ENCODE measurements at regions of chr5 and their contacts with region 1.

Region 1: DNA sequence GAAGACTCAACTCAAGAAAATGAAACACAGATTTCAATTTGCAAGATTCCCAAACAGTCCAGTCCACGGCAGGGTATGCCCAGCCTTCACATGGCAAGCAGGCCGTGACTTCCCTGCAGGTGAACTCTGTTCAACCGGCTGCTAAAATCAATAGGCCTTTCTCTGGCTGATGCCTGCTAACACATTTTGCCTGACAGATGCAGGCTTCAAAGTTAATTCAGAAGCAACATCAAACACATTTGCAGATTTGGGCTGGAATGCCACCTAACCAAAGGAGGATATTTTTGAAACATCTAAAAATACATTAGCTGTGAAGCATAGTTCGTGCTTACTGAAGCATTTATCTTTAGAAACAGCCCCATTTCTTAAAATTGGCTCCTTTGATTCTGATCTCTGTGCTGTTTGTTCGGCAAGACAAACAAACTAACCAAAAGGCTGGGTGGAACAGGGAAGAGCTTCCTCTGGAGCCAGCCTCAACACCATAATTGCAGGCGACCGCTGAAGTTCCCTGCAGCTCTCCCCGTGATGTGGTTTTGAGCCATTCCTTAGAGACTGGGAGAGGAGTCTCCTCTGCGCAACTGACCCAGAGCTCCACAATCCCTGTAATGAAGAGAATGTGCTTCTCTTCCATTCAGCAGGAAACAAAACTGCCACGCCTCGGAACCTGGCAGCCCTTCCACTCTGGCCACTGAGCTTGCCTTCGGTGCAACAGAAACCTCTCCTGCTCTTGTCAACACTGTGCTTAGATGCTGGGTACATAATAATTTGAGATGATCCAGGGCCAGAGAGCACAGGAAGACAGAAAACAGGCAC is 126.5 kb downstream of the MYO10 start:
- DNase-seq: no peak
- ATAC-seq: peak; percentile 48
- H3K4me3 ChIP-seq: no peak overlapping the region
- H3K27ac ChIP-seq: no peak overlapping the region
- H3K4me1 ChIP-seq: peaks cover 7% of the 10 kb centered on the region
- H3K27me3 ChIP-seq: no peaks in the 10 kb centered on the region
- CTCF ChIP-seq: no peak

Region 2: DNA sequence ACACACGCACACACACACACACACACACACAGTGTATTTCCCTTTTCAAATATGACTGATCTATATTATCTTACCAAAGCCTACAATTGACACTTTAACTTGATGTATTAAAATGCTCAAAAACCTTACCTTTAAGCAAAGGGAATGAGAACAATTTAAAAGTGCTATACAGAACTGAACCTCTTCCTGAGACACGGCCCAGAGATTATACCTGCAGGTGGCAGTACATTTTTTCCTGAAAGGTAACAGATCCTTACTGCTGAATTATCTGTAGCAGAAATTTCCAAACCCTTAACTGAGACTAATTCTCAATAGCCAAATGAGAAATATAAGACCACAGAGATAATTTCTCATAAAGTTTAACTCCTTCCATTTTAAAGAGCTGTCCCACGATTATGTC is 35.3 kb after region 1 on chr5:
- CTCF ChIA-PET with region 1: no interaction called
- POLR2A ChIA-PET with region 1: no interaction called
- intact Hi-C with region 1: loop called (anchors 5 kb)
- DNase-seq: peak; percentile 69
- ATAC-seq: peak; percentile 40; the same call in 1 of the 2 replicates
- H3K4me3 ChIP-seq: no peak overlapping the region
- H3K27ac ChIP-seq: no peak overlapping the region
- H3K4me1 ChIP-seq: peaks cover 19% of the 10 kb centered on the region
- H3K27me3 ChIP-seq: no peaks in the 10 kb centered on the region
- CTCF ChIP-seq: peak; percentile 91

Region 3: DNA sequence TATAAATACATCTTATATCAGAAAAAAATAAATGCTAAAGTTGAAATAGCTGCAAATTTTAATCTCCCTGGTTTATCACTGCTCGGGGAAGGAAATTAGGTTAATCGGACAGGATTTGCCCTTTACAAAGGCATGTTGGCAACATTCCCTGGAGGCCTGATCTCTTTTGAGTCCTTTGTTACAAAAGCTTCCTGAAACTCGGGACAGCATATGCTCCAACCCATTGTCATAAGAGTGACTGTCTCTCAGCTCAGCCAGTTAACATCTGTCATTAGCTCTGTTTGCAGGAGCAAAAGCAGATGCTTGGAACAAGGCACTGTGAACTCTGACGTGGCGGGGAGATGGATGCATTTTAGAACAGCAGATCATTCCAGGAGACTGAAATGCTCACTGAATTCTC is 45.9 kb after region 1 on chr5:
- CTCF ChIA-PET with region 1: no interaction called
- POLR2A ChIA-PET with region 1: no interaction called
- intact Hi-C with region 1: no loop called
- DNase-seq: peak; percentile 30
- ATAC-seq: no peak
- H3K4me3 ChIP-seq: no peak overlapping the region
- H3K27ac ChIP-seq: peak overlapping the region; percentile 60
- H3K4me1 ChIP-seq: peaks cover 32% of the 10 kb centered on the region
- H3K27me3 ChIP-seq: no peaks in the 10 kb centered on the region
- CTCF ChIP-seq: no peak

Measured in PC-3 (cell line).